ENCODE measurements at regions of chr16 and their contacts with region 1.

Region 1: DNA sequence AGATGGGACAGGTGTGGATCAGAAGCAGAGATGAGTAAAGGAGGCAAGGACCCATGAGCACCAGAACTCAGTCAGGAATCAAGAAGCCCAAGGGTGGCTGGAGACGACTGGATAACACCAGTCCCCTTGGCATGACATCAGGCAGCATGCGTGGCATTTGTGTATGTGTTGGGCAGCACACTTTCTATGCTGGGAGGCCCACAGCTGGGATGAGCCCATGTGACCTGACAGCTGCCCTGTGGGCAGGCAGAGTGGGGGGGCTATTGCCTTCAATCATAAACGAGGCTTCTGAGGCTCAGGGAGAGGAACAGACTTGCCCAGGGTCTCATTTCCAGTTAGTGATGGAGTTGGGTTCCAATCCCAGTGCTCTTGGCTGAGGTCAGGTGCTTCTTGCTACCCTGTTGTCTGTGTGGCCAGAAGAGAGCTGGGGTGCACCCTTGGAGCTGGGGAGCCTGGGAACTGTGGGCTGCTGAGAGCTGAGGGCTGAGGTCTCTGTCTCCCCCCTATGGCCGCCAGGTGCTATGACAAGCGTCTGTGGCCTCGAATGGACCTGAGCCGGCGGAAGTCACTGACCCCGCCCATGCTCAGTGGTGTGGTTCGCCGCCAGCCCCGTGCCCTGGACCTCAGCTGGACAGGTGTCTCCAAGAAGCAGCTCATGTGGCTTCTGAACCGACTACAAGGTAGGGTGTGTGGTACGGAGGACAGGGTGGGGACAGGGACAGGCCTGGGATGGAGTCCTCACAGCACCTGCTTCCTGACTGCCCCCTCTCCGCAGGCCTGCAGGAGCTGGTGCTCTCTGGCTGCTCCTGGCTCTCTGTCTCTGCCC is 7.1 kb upstream of the ORAI3 start:
- H3K4me3 ChIP-seq: no peak overlapping the region
- H3K27ac ChIP-seq: no peak overlapping the region
- H3K4me1 ChIP-seq: no peaks in the 10 kb centered on the region
- CTCF ChIP-seq: peak; percentile 85

Region 2: GRCh38 chr16:30927789-30928378 is 13.9 kb before region 1 on chr16:
- CTCF ChIA-PET with region 1: interaction called, 26 read pairs
- POLR2A ChIA-PET with region 1: interaction called, 15 read pairs
- H3K4me3 ChIP-seq: no peak overlapping the region
- H3K27ac ChIP-seq: no peak overlapping the region
- H3K4me1 ChIP-seq: no peaks in the 10 kb centered on the region
- CTCF ChIP-seq: no peak

Region 3: GRCh38 chr16:30964574-30965226 is 22.9 kb after region 1 on chr16:
- CTCF ChIA-PET with region 1: interaction called, 4 read pairs
- POLR2A ChIA-PET with region 1: interaction called, 10 read pairs
- H3K4me3 ChIP-seq: no peak overlapping the region
- H3K27ac ChIP-seq: no peak overlapping the region
- H3K4me1 ChIP-seq: no peaks in the 10 kb centered on the region
- CTCF ChIP-seq: no peak

Measured in HEK293 (cell line).